A549 (cell line): ENCODE measurements at regions of chr11 and their contacts with region 1.

Region 1: GRCh38 chr11:12288212-12288930 is 89.0 kb upstream of the PARVA start:
- DNase-seq: peak; percentile 88 to 90
- ATAC-seq: peak; percentile 43 to 77
- H3K4me3 ChIP-seq: no peak overlapping the region
- H3K27ac ChIP-seq: peak overlapping the region; percentile 94 to 99
- H3K4me1 ChIP-seq: peaks cover 46% of the 10 kb centered on the region
- CTCF ChIP-seq: peak; percentile 97
- EP300 ChIP-seq: no peak
- POLR2A ChIP-seq: no peak
- RAD21 ChIP-seq: peak; percentile 93 to 96

Region 2: GRCh38 chr11:12019337-12019736 is 269.0 kb before region 1 on chr11:
- CTCF ChIA-PET with region 1: no interaction called
- POLR2A ChIA-PET with region 1: no interaction called
- DNase-seq: no peak
- ATAC-seq: no peak
- H3K4me3 ChIP-seq: no peak overlapping the region
- H3K27ac ChIP-seq: no peak overlapping the region
- H3K4me1 ChIP-seq: no peaks in the 10 kb centered on the region
- CTCF ChIP-seq: no peak
- EP300 ChIP-seq: no peak
- POLR2A ChIP-seq: no peak
- RAD21 ChIP-seq: no peak

Region 3: GRCh38 chr11:12185914-12186313 is 102.5 kb before region 1 on chr11:
- CTCF ChIA-PET with region 1: no interaction called
- POLR2A ChIA-PET with region 1: no interaction called
- DNase-seq: no peak
- ATAC-seq: no peak
- H3K4me3 ChIP-seq: no peak overlapping the region
- H3K27ac ChIP-seq: peak overlapping the region in 1 of 2 experiments; percentile 49; a peak in 2 of 6 replicates
- H3K4me1 ChIP-seq: peaks cover 38% of the 10 kb centered on the region
- CTCF ChIP-seq: no peak
- EP300 ChIP-seq: no peak
- POLR2A ChIP-seq: no peak
- RAD21 ChIP-seq: no peak

Region 4: DNA sequence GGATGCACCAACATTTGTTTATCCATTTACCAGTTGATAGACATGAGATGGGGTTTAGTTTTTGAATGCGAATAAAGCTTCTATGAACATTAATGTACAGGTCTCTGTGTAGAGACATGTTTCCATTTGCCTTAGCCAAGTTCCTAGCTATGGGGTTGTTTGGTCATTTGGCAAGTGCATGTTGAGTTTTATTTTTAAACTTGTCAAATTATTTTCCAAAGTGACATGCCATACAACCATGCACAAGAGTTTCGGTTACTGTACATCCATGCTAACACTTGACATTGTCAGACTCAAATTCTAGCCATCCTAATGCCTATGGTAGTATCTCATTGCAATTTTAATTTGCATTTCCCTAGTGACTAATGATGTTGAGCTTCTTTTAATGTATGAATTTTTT is 18.5 kb after region 1 on chr11:
- CTCF ChIA-PET with region 1: interaction called, 28 read pairs
- POLR2A ChIA-PET with region 1: no interaction called
- DNase-seq: no peak
- ATAC-seq: no peak
- H3K4me3 ChIP-seq: no peak overlapping the region
- H3K27ac ChIP-seq: no peak overlapping the region
- H3K4me1 ChIP-seq: no peaks in the 10 kb centered on the region
- CTCF ChIP-seq: no peak
- EP300 ChIP-seq: no peak
- POLR2A ChIP-seq: no peak
- RAD21 ChIP-seq: no peak

Region 5: DNA sequence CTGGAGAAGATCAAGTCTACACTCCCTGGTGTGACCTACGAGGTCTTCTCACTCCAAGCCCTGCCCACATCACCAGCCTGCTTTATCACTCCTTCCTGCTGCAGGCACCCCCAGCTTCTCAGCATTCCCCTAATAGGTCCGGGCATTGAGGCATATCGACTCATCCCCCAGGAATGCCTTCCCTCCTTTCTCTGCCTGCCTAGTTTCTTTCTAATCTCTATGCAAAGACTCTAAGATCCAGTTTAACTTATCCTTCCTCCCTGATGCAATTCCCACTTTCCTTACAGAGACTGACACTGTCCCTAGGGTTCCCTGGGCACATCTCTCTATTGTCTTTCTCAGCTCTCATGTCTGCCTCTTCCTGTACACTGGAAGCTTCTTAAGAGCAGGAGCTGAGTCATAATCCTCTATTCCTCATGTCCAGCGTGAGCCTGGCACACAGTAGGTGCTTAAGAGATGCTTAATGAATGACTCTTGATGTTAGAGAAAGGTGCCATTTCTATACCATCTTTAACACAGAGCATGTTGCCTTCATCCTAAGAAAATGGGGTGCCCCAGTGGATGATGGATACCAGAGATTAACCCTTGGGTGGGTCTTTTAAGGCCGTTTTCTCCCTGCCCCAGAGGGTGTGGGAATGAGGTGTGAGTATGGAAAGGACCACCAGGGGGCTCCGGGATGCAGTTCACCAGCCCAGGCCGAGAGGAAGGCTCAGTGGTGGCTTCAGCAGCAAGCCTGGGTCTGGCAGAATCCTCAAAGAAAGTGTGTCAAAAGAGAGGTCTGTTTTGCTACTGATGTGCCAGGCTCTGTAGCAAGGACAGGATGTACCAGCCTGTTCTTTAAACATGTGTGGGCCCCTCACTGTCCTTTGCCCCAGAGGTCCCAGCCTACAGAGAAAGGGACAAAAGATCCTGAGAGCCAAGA is 123.7 kb after region 1 on chr11:
- CTCF ChIA-PET with region 1: interaction called, 12 read pairs
- POLR2A ChIA-PET with region 1: no interaction called
- DNase-seq: peak; percentile 74 to 84
- ATAC-seq: peak; percentile 89 to 96
- H3K4me3 ChIP-seq: no peak overlapping the region
- H3K27ac ChIP-seq: peak overlapping the region; percentile 78 to 91
- H3K4me1 ChIP-seq: peaks cover 23% of the 10 kb centered on the region
- CTCF ChIP-seq: peak; percentile 79
- EP300 ChIP-seq: no peak
- POLR2A ChIP-seq: no peak
- RAD21 ChIP-seq: peak; percentile 77 to 80

Region 6: DNA sequence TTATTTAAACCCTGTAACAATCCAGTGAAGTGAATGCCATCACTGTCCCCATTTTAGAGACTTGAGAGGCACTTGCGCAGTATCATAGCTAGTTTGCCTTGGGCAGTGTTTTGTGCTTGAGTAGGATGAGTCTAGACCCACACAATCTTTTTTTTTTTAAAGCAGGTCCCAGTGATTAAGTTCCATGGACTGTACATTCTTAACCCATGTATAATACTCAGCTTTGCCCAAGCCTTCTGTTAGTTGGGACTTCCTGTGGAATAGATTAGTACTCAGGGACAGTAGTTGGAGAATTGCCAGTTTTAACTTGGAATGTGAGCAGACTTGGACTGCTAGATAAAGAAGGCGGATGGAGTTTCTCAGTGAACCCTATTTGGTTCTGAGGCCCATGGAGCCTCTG is 612.1 kb after region 1 on chr11:
- CTCF ChIA-PET with region 1: interaction called, 13 read pairs
- POLR2A ChIA-PET with region 1: no interaction called
- DNase-seq: peak in 1 of 2 experiments; percentile 37
- ATAC-seq: peak; percentile 48 to 70; a peak in 4 of 6 replicates
- H3K4me3 ChIP-seq: no peak overlapping the region
- H3K27ac ChIP-seq: no peak overlapping the region
- H3K4me1 ChIP-seq: peaks cover 20% of the 10 kb centered on the region; the same call in 2 of the 3 replicates
- CTCF ChIP-seq: no peak
- EP300 ChIP-seq: no peak
- POLR2A ChIP-seq: no peak
- RAD21 ChIP-seq: no peak